PC-3 (cell line): ENCODE measurements at regions of chr6 and their contacts with region 1.

Region 1: GRCh38 chr6:129598244-129599187 is 111.5 kb downstream of the ARHGAP18 start:
- DNase-seq: peak; percentile 81
- ATAC-seq: peak; percentile 57
- H3K4me3 ChIP-seq: no peak overlapping the region
- H3K27ac ChIP-seq: no peak overlapping the region
- H3K4me1 ChIP-seq: peaks cover 18% of the 10 kb centered on the region
- H3K27me3 ChIP-seq: no peaks in the 10 kb centered on the region
- CTCF ChIP-seq: peak; percentile 79

Region 2: DNA sequence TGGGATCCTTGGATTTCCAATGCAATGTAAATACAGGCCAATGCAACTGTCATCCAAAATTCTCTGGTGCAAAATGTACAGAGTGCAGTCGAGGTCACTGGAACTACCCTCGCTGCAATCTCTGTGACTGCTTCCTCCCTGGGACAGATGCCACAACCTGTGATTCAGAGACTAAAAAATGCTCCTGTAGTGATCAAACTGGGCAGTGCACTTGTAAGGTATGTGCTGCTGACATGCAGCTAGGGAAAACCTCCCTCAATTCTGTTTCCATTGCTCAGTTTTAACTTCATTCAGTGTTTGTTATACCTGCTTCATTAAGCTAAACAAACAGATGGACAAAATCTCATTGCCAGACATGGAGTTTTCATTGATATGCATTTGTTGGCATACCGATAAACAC is 285.6 kb before region 1 on chr6:
- CTCF ChIA-PET with region 1: no interaction called
- POLR2A ChIA-PET with region 1: no interaction called
- intact Hi-C with region 1: no loop called
- DNase-seq: peak; percentile 92
- ATAC-seq: peak; percentile 90
- H3K4me3 ChIP-seq: peak overlapping the region; percentile 20; the same call in 1 of the 2 replicates
- H3K27ac ChIP-seq: peak overlapping the region; percentile 77
- H3K4me1 ChIP-seq: peaks cover 45% of the 10 kb centered on the region
- H3K27me3 ChIP-seq: no peaks in the 10 kb centered on the region
- CTCF ChIP-seq: no peak

Region 3: GRCh38 chr6:129621247-129621646 is 22.7 kb after region 1 on chr6:
- CTCF ChIA-PET with region 1: no interaction called
- POLR2A ChIA-PET with region 1: no interaction called
- intact Hi-C with region 1: no loop called
- DNase-seq: peak; percentile 51
- ATAC-seq: 0 out of 2 replicates have a peak, but pooled peaks have one; percentile 29
- H3K4me3 ChIP-seq: no peak overlapping the region
- H3K27ac ChIP-seq: no peak overlapping the region
- H3K4me1 ChIP-seq: no peaks in the 10 kb centered on the region
- H3K27me3 ChIP-seq: no peaks in the 10 kb centered on the region
- CTCF ChIP-seq: peak; percentile 63

Region 4: GRCh38 chr6:129667621-129668020 is 69.1 kb after region 1 on chr6:
- CTCF ChIA-PET with region 1: interaction called, 4 read pairs
- POLR2A ChIA-PET with region 1: no interaction called
- intact Hi-C with region 1: loop called (anchors 1 kb)
- DNase-seq: peak; percentile 57
- ATAC-seq: no peak; the same call in 1 of the 2 replicates
- H3K4me3 ChIP-seq: no peak overlapping the region
- H3K27ac ChIP-seq: no peak overlapping the region
- H3K4me1 ChIP-seq: peaks cover 20% of the 10 kb centered on the region
- H3K27me3 ChIP-seq: no peaks in the 10 kb centered on the region
- CTCF ChIP-seq: no peak

Region 5: DNA sequence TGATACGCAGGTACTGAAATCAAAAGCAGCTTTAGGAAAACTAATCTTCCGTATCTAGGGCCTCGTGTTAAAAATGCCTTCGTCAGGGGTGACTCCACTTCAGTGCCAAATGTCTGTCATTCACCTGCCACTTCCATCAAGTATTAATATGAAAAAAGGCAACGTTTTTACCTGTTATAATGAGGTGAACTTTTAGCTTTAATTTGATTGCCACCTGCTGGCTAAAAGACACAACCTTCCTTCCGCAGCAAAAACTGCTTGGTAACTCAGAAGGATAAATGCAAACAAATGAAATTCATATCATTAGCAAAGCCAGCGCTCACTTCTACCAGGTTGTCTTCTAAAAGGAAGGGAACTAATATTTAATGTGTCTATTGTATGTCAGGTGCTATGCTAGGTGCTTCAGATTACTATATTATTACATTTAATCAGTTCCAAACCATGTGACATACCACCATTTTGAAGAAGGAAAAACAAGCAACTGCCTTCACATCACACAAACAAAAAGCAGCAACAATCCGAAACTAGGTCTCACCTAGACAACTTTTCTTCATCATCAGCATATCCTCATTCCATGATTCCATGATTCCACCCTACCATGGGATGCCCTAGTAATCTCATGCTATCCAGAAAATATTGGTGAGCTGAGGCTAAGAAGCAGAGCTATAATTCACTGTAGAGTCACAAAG is 132.1 kb after region 1 on chr6:
- CTCF ChIA-PET with region 1: interaction called, 4 read pairs
- POLR2A ChIA-PET with region 1: no interaction called
- intact Hi-C with region 1: loop called (anchors 1 kb)
- DNase-seq: peak; percentile 61
- ATAC-seq: peak; percentile 45; the same call in 1 of the 2 replicates
- H3K4me3 ChIP-seq: no peak overlapping the region
- H3K27ac ChIP-seq: no peak overlapping the region
- H3K4me1 ChIP-seq: peaks cover 4% of the 10 kb centered on the region; the same call in 1 of the 2 replicates
- H3K27me3 ChIP-seq: no peaks in the 10 kb centered on the region
- CTCF ChIP-seq: peak; percentile 77

Region 6: GRCh38 chr6:129748212-129748900 is 149.8 kb after region 1 on chr6:
- CTCF ChIA-PET with region 1: no interaction called
- POLR2A ChIA-PET with region 1: no interaction called
- intact Hi-C with region 1: loop called (anchors 1 kb)
- DNase-seq: peak; percentile 70
- ATAC-seq: peak; percentile 39; the same call in 1 of the 2 replicates
- H3K4me3 ChIP-seq: peak overlapping the region; percentile 57; the same call in 1 of the 2 replicates
- H3K27ac ChIP-seq: peak overlapping the region; percentile 92
- H3K4me1 ChIP-seq: peaks cover 55% of the 10 kb centered on the region
- H3K27me3 ChIP-seq: no peaks in the 10 kb centered on the region
- CTCF ChIP-seq: peak; percentile 15; the same call in 1 of the 2 replicates

Region 7: DNA sequence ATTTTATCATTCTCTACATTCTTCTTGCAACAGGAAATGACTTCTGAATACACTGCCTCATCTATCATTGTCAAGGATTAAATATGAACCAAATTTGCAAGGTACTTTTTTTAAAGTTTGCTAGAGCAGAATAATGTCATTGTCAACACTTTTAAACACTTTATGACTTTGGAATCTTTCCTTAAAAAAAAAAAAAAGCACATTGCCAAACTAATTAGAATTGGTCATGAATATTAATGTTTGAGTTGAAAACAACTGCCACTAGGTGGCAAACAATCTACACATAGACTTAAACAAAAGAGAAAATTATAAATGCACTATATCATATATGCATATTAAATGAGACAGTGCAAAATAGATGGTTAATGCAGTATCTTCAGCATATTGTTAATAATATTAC is 295.1 kb after region 1 on chr6:
- CTCF ChIA-PET with region 1: no interaction called
- POLR2A ChIA-PET with region 1: no interaction called
- intact Hi-C with region 1: loop called (anchors 1 kb)
- DNase-seq: peak; percentile 14
- ATAC-seq: no peak
- H3K4me3 ChIP-seq: no peak overlapping the region
- H3K27ac ChIP-seq: no peak overlapping the region
- H3K4me1 ChIP-seq: peaks cover 28% of the 10 kb centered on the region
- H3K27me3 ChIP-seq: no peaks in the 10 kb centered on the region
- CTCF ChIP-seq: peak; percentile 70

Region 8: GRCh38 chr6:129981598-129981997 is 383.1 kb after region 1 on chr6:
- CTCF ChIA-PET with region 1: no interaction called
- POLR2A ChIA-PET with region 1: no interaction called
- intact Hi-C with region 1: loop called (anchors 2 kb)
- DNase-seq: peak; percentile 22
- ATAC-seq: no peak
- H3K4me3 ChIP-seq: no peak overlapping the region
- H3K27ac ChIP-seq: no peak overlapping the region
- H3K4me1 ChIP-seq: no peaks in the 10 kb centered on the region
- H3K27me3 ChIP-seq: no peaks in the 10 kb centered on the region
- CTCF ChIP-seq: peak; percentile 59

Region 9: DNA sequence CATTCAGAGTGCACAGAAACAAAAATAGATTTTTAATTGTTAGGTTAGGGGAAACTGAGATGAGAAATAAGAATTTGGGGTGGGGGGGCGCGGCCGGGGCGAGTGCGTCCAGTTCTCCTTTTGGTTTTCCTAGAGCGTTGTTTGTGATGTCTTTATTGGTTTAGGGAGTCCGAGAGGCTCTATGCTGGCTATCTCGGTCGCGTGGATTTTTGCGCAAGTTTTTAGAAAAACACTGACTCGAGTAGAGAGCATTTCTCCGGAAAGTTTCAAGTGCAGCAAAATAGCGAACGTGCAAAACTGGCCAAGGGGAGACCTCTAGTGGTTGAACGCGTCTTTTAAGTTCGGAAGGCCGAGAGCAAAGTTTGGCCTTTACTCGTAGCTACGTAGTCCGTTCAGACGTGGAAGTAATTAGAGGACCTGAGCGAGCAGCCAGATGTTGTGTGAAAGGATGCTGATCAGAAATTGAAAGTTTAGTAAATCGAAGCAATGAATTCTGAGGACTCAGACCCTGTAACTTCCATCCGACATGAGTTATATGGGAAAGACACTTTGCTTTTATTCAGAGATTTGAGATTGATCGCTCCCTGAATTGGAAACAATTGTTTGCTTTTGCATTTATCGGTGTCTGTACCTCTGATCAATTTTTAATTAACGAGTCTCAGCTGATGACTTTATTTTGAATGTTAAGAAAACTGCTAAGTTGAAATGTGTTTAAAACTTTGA is 422.6 kb after region 1 on chr6:
- CTCF ChIA-PET with region 1: no interaction called
- POLR2A ChIA-PET with region 1: no interaction called
- intact Hi-C with region 1: loop called (anchors 5 kb)
- DNase-seq: peak; percentile 85
- ATAC-seq: peak; percentile 54
- H3K4me3 ChIP-seq: peak overlapping the region; percentile 75
- H3K27ac ChIP-seq: no peak overlapping the region
- H3K4me1 ChIP-seq: no peaks in the 10 kb centered on the region; the same call in 1 of the 2 replicates
- H3K27me3 ChIP-seq: no peaks in the 10 kb centered on the region
- CTCF ChIP-seq: peak; percentile 77